ENCODE measurements at regions of chr5 and their contacts with region 1.

Region 1: GRCh38 chr5:52787600-52788504 is at the starts of genes ITGA1 and PELO:
- DNase-seq: peak; percentile 86
- ATAC-seq: peak; percentile 89 to 97
- total RNA-seq, gene ITGA1: 29.3 to 34.9 TPM
- total RNA-seq, gene PELO: 16.1 to 23.6 TPM

Region 2: DNA sequence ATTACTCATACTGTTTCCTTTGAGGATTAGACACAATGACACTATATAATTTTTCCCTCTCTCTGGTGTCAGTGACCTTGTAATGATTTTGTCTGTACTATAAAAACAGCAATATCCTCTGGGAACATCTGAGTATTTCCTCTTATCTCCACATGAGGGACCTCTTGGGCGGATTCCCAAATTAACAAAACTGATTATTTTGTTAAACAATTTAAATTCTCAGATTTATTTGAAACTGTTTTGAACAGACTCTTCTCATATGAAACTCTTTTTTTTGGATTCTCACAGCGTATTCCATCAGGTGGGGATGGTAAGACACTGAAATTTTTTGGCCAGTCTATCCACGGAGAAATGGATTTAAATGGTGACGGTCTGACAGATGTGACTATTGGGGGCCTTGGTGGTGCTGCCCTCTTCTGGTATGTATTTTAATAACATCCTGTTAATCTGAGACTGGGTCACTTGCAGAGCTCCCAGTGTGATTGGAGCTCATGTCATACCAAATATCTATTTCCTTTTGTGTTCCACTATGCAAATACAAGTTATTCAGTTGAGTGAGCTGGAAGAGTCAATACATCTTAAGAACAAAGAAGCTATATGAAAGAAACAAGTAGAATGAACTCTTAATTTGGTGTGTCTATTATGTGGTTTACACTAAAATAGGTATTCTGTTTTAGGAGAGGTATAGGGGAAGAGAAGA is 127.5 kb after region 1 on chr5:
- intact Hi-C with region 1: loop called (anchors 5 kb)
- DNase-seq: peak; percentile 29
- ATAC-seq: peak; percentile 94 to 95

Measured in left cardiac atrium (tissue), 4 donors.